ENCODE measurements at regions of chr17 and their contacts with region 1.

Region 1: GRCh38 chr17:74961657-74962490 is 10.7 kb downstream of the HID1 start:
- DNase-seq: peak; percentile 89
- ATAC-seq: peak; percentile 78
- H3K4me3 Mint-ChIP-seq: no peak overlapping the region
- H3K27ac Mint-ChIP-seq: no peak overlapping the region
- H3K4me1 Mint-ChIP-seq: peaks cover 10% of the 10 kb centered on the region
- H3K27me3 Mint-ChIP-seq: peaks cover 2% of the 10 kb centered on the region

Region 2: DNA sequence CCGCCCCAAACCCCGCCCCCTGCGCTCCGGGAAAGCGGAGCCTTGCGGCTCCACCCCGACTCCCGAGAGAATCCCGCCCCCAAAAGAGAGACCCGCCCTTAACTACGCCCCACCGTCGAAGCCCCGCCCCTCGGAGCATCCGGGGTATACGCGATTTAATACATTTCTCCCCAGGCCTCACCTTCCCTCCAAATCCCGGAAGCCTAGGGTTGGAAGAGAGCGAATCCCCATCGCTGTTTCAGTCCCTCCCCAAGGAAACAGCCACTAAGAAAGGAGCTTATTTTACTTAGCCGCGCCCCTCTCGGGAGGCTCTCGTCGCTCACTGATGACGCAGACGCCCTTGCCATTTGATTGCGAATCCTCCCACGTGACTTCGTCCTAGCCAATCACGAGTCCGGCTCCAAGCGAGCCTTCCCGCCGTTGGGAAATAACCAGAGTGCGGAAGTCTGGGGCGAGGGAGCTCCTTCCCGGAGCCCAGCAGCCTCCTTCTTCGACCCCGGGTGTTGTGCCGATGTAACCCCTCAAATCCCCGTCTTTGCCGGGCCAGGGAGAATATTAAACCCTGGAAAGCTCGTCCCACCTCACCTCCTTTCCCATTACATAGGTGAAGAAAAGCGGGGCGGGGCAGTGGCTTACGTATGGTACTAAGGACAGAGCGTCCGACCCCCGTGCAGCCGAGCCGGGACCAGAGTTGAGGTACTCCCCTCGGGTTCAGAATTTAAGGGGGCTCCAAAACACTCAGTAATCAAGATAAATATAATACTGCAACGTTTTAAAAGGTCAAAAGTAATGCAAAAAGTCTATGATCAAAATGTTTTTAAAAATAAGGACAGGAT is 88.6 kb before region 1 on chr17:
- CTCF ChIA-PET with region 1: interaction called, 10 read pairs
- POLR2A ChIA-PET with region 1: no interaction called
- DNase-seq: peak; percentile 100
- ATAC-seq: peak; percentile 97
- H3K4me3 Mint-ChIP-seq: peak overlapping the region; percentile 82
- H3K27ac Mint-ChIP-seq: peak overlapping the region; percentile 83
- H3K4me1 Mint-ChIP-seq: peaks cover 33% of the 10 kb centered on the region
- H3K27me3 Mint-ChIP-seq: no peaks in the 10 kb centered on the region

Region 3: DNA sequence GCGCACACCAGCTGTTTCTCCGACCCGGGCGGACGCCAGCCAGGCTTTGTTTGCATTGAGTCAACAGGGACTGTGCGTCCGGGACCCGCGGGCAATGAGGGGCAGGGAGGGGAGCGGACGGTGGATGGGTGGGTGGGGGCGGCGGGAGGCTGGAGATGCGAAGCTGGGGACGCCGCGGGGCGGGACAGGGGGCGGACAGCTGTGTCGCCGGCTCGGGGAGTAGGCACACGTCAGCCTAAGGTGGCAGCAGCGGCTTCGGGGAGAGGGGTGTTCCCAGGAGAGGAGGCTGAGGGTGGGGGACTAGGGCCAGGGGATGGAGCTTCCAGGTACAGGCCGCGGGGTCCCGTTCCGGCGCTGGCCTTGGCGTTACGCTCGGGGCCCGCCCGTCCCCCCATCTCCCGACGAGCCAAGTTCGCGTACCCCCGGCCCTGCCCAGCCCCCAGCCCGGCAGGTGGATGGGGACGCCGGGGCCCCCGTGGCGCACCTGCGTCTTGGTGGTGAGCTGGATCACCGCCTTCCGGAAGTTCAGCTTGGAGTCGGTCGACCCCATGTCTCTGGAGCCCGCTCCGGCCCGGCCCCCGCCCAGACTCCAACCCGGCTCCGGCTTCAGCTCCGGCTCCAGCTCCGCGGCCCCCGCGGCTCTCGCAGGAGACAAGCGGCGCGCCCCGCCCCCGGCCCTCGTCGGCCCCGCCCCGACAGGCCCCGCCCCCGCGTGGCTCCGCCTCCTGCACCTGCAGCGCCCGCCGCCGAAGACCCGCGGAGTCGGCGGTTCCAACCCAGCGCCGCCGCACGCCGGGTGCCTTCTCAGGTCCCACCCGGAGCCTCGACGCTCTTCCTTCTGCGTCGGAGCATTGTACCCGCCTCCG is 10.5 kb after region 1 on chr17 and contains the start of gene HID1:
- CTCF ChIA-PET with region 1: interaction called, 82 read pairs
- POLR2A ChIA-PET with region 1: no interaction called
- DNase-seq: peak; percentile 76
- ATAC-seq: peak; percentile 92
- H3K4me3 Mint-ChIP-seq: peak within 1 kb of the TSS; percentile 67
- H3K27ac Mint-ChIP-seq: no peak within 1 kb of the TSS
- H3K4me1 Mint-ChIP-seq: peaks cover 5% of the 10 kb centered on the region
- H3K27me3 Mint-ChIP-seq: peaks cover 33% of the 10 kb centered on the region
- total RNA-seq, gene HID1: 0.18 to 0.55 TPM

Region 4: DNA sequence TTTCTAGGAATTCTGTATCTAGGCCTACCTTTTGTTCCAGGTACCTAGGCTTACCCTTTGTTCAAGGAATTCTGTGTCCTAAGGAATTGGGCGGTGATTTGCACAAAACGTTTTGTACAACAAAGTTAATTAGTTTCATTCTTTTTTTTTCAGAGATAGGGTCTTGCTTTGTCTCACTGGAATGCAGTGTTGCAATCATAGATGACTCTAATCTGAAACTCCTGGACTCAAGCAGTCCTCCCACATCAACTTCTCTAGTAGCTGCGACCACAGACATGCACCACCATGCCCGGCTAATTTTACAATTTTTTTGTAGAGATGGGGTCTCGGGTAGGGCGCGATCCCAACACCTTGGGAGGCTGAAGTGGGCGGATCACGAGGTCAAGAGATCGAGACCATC is 32.6 kb after region 1 on chr17:
- CTCF ChIA-PET with region 1: interaction called, 25 read pairs
- POLR2A ChIA-PET with region 1: no interaction called
- DNase-seq: no peak
- ATAC-seq: no peak
- H3K4me3 Mint-ChIP-seq: no peak overlapping the region
- H3K27ac Mint-ChIP-seq: no peak overlapping the region
- H3K4me1 Mint-ChIP-seq: peaks cover 10% of the 10 kb centered on the region
- H3K27me3 Mint-ChIP-seq: peaks cover 17% of the 10 kb centered on the region

Region 5: DNA sequence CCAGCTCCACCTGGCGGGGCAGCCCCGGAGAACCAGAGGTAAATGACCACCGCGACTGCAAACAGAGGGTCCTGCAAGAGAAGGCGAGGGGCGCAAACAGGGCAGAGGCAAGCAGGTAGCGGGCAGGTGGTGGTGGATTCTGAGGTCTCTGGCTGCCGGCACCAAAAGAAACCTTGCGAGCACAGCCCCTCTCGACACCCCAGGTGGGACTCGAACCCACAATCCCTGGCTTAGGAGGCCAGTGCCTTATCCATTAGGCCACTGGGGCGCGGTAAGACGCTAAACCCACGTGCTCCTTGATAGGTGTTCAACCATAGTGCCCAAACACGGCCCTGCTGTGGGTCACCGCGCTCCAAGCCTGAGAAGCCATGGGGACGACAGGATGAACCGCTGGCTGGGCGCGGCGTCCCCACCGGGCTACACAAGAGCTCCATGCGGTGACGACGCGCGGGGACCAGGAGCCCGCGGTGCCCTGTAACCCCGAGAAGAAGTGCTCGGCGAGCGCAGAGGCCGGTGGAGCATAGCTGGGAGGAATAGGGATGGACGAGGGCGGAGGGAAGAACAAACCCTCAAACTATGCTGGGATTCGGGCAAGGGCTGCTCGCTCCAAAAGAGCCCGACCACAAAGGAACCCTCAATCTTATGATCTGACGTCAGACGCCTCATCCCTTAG is 72.5 kb after region 1 on chr17:
- CTCF ChIA-PET with region 1: interaction called, 28 read pairs
- POLR2A ChIA-PET with region 1: interaction called, 3 read pairs
- DNase-seq: peak; percentile 93
- ATAC-seq: peak; percentile 67
- H3K4me3 Mint-ChIP-seq: peak overlapping the region; percentile 93
- H3K27ac Mint-ChIP-seq: peak overlapping the region; percentile 95
- H3K4me1 Mint-ChIP-seq: peaks cover 52% of the 10 kb centered on the region
- H3K27me3 Mint-ChIP-seq: peaks cover 2% of the 10 kb centered on the region

Region 6: GRCh38 chr17:75173526-75173925 is 211.7 kb after region 1 on chr17:
- CTCF ChIA-PET with region 1: interaction called, 10 read pairs
- POLR2A ChIA-PET with region 1: no interaction called
- DNase-seq: no peak
- ATAC-seq: no peak
- H3K4me3 Mint-ChIP-seq: no peak overlapping the region
- H3K27ac Mint-ChIP-seq: peak overlapping the region; percentile 28
- H3K4me1 Mint-ChIP-seq: peaks cover 21% of the 10 kb centered on the region
- H3K27me3 Mint-ChIP-seq: no peaks in the 10 kb centered on the region

Measured in activated CD8-positive, alpha-beta T cell treated with anti-CD3 and anti-CD28 coated beads, Interleukin-2, amount 10 ng/mL, durations not matched to agents 7 days and 5 days (primary cell).